MCF 10A (cell line): ENCODE measurements at regions of chr5 and their contacts with region 1.

Region 1: DNA sequence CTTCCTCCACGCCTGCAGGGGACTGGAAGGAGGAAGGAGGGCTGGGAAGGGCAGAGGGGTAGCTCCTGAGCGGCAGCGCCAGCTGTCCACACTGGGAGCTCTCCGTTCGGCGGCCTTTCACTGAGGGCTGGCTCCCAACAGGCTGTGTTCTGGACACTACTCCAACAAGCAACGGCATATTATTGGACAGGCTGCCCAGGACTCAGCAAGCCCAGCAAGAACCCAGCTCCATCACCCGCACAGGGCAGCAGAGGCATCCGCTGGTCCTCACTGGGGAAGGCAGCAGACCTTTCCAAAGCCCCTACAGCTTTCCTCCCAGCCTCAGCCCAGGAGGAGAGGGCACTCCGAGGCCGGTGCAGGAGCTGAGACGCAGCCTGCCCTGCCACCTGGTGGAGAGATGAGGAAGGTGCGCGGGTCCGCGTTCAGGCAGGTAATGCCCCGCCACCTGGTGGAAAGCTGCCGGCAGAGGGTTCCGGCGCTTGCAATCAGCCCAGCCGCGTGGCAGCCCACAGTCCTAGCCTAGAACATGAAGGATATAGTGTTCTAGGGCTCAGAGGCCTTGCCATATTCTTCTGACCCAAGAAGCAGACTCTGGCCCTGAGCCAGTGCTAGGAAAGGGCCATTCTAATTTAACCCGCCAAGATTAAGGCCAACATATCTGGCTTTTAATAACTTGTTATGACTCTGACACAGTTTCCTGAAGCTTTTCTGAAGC is 74.4 kb downstream of the NRG2 start:
- DNase-seq: peak; percentile 89
- H3K4me3 Mint-ChIP-seq: no peak overlapping the region
- H3K27ac Mint-ChIP-seq: no peak overlapping the region
- H3K4me1 Mint-ChIP-seq: no peaks in the 10 kb centered on the region
- H3K27me3 Mint-ChIP-seq: no peaks in the 10 kb centered on the region
- CTCF ChIP-seq: peak; percentile 100

Region 2: GRCh38 chr5:139633295-139634027 is 335.2 kb before region 1 on chr5:
- CTCF ChIA-PET with region 1: interaction called, 23 read pairs
- POLR2A ChIA-PET with region 1: no interaction called
- intact Hi-C with region 1: no loop called
- DNase-seq: peak; percentile 83
- H3K4me3 Mint-ChIP-seq: no peak overlapping the region
- H3K27ac Mint-ChIP-seq: no peak overlapping the region
- H3K4me1 Mint-ChIP-seq: peaks cover 34% of the 10 kb centered on the region
- H3K27me3 Mint-ChIP-seq: no peaks in the 10 kb centered on the region
- CTCF ChIP-seq: peak; percentile 99

Region 3: DNA sequence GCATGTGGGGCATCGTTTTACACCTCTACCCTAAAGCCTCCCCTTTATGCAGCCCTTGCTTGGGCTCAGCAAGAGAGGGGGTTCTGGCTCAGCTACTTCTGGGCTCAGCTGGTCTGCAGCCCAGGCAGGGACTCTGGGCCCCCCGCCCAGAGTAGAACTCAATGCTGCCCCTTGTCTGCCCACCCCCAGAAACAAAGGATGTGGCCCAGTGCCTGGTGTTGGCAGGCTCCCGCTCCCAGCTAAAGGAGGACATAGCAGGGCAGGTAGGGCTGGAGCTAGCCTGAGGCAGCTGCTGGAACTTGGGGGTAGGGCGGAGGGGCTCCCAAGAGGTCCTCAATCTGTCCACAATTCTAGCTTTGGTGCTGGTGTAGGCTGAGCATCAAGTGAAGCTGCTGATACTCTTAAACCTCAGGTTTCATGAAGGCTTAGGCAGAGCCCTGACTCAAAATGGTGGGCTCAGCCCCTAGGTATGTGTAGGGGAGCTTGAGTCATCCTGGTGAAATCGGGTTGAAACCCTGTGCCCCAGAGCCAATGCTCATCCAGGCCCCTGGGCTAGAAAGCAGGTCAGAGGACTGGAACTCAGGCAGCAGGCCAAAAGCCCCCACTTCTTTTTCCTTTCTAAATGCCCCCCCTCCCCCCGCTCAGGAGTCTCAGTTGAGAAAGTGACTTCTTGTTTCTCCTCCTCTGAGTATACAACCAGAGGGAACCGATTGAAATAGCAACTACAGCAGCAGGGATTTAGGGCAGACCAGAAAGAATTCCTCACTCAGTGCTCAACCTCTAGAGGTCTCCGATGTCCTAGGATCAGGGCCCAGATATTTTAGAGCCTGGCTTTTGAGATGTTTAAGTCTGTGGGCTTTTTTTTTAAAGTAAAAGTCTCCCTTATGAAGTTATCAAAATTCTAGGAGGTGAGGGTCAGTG is 161.7 kb before region 1 on chr5:
- CTCF ChIA-PET with region 1: interaction called, 17 read pairs
- POLR2A ChIA-PET with region 1: no interaction called
- intact Hi-C with region 1: no loop called
- DNase-seq: no peak
- H3K4me3 Mint-ChIP-seq: no peak overlapping the region
- H3K27ac Mint-ChIP-seq: no peak overlapping the region
- H3K4me1 Mint-ChIP-seq: no peaks in the 10 kb centered on the region
- H3K27me3 Mint-ChIP-seq: peaks cover 46% of the 10 kb centered on the region
- CTCF ChIP-seq: no peak

Region 4: DNA sequence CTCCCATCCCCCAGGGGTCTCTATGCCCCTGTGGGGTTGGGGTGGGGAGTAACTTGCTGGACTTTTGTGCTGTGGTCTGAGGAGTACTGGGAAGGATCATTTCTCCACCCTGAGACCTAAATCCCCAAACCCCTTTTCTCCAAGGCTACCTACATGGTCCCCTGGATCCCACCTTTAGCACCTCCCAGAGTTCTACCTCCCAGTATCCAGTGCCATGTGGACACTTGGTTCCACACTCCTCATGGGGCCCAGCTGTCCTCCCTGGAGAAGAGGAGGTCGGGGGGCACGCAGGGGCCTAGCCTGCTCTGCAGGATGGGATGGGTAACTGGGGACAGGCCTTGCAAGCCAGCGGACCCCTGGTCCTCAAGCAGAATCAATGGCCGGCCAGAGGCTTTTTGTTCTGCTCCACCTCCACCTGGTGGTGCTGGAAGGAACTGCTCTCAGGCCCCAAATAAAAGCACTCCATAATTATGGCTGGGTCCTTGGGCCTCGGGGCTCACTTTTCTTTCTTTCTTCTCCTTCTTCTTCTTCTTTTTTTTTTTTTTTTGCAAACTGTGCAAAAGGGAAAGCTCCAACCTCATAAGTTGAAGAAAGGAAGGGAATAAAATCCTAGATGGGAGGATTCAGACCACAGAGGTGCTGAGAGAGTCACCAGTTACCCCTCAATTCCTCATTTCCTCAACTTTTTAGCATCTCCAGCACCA is 104.7 kb before region 1 on chr5:
- CTCF ChIA-PET with region 1: interaction called, 286 read pairs
- POLR2A ChIA-PET with region 1: interaction called, 6 read pairs
- intact Hi-C with region 1: loop called (anchors 1 kb)
- DNase-seq: peak; percentile 73
- H3K4me3 Mint-ChIP-seq: no peak overlapping the region
- H3K27ac Mint-ChIP-seq: no peak overlapping the region
- H3K4me1 Mint-ChIP-seq: no peaks in the 10 kb centered on the region
- H3K27me3 Mint-ChIP-seq: peaks cover 22% of the 10 kb centered on the region
- CTCF ChIP-seq: peak; percentile 93

Region 5: GRCh38 chr5:139904816-139905661 is 63.7 kb before region 1 on chr5:
- CTCF ChIA-PET with region 1: interaction called, 100 read pairs
- POLR2A ChIA-PET with region 1: no interaction called
- intact Hi-C with region 1: no loop called
- DNase-seq: no peak
- H3K4me3 Mint-ChIP-seq: no peak overlapping the region
- H3K27ac Mint-ChIP-seq: no peak overlapping the region
- H3K4me1 Mint-ChIP-seq: no peaks in the 10 kb centered on the region
- H3K27me3 Mint-ChIP-seq: peaks cover 35% of the 10 kb centered on the region
- CTCF ChIP-seq: no peak

Region 6: DNA sequence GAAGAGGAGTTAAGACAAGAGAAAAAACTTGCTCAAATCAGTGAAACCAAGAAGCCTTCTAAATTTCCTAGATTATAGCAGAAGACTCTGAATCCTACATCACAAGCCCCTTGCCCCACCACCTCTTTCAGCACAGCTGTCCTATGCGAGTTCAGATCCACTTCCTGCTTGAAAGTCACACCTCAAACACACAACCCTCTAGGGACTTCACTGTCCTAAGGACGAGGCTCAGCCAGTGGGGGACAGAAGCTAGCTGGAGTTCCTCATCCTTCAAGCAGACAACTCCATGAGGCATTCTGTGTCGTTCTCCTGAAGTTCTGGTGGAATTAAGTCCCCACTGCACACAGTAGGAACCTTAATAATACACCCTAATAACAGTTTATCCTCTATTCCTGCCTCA is 30.1 kb after region 1 on chr5:
- CTCF ChIA-PET with region 1: interaction called, 47 read pairs
- POLR2A ChIA-PET with region 1: no interaction called
- intact Hi-C with region 1: no loop called
- DNase-seq: no peak
- H3K4me3 Mint-ChIP-seq: no peak overlapping the region
- H3K27ac Mint-ChIP-seq: no peak overlapping the region
- H3K4me1 Mint-ChIP-seq: no peaks in the 10 kb centered on the region
- H3K27me3 Mint-ChIP-seq: peaks cover 50% of the 10 kb centered on the region
- CTCF ChIP-seq: no peak

Region 7: DNA sequence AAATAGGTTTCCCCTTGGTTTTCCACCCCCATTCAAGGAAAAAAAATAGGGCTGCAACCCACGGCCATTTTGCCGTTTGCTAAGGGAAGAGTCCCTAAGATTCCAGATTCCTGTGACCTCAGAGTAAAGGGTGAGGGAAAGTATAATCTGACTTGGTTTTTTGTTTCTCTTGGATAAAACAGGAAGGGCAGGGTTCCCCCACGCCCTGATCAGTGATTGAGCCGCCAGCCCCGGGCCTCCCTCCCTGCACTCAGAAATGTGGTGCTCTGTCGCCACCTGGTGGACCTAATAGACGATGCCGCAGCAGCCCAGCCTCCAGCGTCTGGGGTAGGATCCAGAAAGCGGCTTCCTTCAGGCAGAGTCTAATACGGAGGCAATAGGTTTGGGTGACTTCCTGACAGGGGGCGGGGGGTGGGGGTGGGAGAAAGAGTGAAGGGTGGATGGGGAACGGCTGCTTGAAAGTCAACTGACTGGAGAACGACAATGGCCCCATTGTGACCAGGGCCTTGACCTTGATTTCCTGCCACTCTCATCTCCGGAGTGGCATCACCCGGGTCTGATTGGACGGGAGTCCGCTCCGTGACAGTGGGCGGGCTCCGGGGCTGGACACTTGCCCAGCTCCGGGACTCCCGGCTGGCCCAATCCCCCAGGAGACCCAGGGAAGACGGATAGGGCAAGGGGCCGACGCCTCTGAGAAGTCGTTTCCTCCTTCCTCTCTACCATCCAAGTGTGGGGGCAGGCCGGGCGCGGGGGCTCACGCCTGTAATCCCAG is 188.5 kb after region 1 on chr5:
- CTCF ChIA-PET with region 1: interaction called, 31 read pairs
- POLR2A ChIA-PET with region 1: interaction called, 3 read pairs
- intact Hi-C with region 1: loop called (anchors 1 kb)
- DNase-seq: peak; percentile 93
- H3K4me3 Mint-ChIP-seq: peak overlapping the region; percentile 62
- H3K27ac Mint-ChIP-seq: peak overlapping the region; percentile 9
- H3K4me1 Mint-ChIP-seq: peaks cover 9% of the 10 kb centered on the region
- H3K27me3 Mint-ChIP-seq: no peaks in the 10 kb centered on the region
- CTCF ChIP-seq: peak; percentile 97